ENCODE measurements at regions of chr7 and their contacts with region 1.

Region 1: DNA sequence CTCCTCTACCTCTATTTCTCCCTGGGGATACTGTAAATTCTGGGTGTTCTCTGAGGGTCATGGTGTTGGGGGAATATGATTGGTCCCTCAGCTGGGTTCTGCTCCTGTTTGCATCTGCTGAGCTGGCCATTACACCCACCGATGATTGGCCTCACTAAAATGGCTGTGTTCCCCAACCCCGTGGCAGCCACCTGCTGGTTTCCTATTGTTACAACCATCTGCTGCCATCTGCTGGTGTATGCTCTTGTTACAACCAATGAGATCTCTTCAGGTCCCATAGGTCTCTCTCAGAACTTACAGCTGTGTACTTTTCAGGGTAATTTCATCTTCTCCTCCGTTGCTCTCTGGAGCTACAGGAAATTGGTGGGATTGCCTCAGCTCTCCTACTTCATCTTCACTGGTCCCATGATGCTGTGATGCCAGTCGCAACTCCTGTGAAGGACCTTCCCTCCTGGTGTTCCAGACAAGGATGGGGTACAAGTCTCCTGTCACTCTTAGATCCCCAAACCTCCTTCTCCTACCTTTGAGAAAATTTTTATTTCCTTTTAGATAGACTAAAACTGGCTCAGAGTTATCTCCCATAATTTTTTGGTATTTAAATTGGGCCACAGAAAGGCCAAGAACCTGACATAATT is 303.5 kb upstream of the SMIM30 start:
- DNase-seq: peak; percentile 76 to 86 (median 76)
- ATAC-seq: peak; percentile 86 to 90
- H3K4me3 ChIP-seq: no peak overlapping the region
- H3K27ac ChIP-seq: no peak overlapping the region
- H3K4me1 ChIP-seq: no peaks in the 10 kb centered on the region
- H3K27me3 ChIP-seq: no peaks in the 10 kb centered on the region

Region 2: DNA sequence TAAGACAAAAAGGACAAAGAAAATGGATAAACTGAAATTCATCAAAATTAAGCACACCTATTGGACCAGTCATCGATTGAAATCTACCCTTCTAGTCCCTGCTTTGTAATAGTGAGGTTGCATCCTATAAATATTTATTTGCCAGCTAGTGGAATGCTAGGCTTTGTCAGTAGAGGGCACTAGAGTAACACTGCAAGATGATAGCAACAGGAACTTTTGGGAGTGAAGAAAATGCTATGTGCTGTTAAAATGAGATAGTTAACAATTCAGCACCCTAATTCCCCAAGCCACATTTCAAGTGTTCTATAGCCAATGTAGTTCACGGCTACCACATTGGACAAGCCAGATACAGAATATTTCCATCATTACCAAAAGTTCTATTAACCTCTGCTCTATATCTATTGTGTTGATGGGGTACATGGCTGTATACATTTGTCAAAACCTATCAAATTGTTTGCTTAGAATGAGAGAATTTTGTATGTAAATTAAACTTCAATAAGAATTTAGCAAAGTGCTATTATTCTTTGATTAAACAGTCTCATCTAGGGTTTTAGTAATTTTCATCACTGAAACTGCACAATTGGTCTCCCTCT is 871.2 kb before region 1 on chr7:
- intact Hi-C with region 1: loop called in 3 of 4 experiments (anchors 5 to 10 kb)
- DNase-seq: no peak
- ATAC-seq: peak; percentile 56 to 71
- H3K4me3 ChIP-seq: no peak overlapping the region
- H3K27ac ChIP-seq: no peak overlapping the region
- H3K4me1 ChIP-seq: no peaks in the 10 kb centered on the region
- H3K27me3 ChIP-seq: no peaks in the 10 kb centered on the region

Region 3: GRCh38 chr7:113015032-113015645 is 406.7 kb before region 1 on chr7:
- intact Hi-C with region 1: loop called in 1 of 4 experiments (anchors 5 kb)
- DNase-seq: no peak
- ATAC-seq: no peak
- H3K4me3 ChIP-seq: no peak overlapping the region
- H3K27ac ChIP-seq: no peak overlapping the region
- H3K4me1 ChIP-seq: no peaks in the 10 kb centered on the region
- H3K27me3 ChIP-seq: no peaks in the 10 kb centered on the region

Measured in right cardiac atrium (tissue), 5 donors.